Activated CD4-positive, alpha-beta memory T cell treated with anti-CD3 and anti-CD28 coated beads for 36 hours (primary cell): ENCODE measurements at regions of chr2 and their contacts with region 1.

Region 1: DNA sequence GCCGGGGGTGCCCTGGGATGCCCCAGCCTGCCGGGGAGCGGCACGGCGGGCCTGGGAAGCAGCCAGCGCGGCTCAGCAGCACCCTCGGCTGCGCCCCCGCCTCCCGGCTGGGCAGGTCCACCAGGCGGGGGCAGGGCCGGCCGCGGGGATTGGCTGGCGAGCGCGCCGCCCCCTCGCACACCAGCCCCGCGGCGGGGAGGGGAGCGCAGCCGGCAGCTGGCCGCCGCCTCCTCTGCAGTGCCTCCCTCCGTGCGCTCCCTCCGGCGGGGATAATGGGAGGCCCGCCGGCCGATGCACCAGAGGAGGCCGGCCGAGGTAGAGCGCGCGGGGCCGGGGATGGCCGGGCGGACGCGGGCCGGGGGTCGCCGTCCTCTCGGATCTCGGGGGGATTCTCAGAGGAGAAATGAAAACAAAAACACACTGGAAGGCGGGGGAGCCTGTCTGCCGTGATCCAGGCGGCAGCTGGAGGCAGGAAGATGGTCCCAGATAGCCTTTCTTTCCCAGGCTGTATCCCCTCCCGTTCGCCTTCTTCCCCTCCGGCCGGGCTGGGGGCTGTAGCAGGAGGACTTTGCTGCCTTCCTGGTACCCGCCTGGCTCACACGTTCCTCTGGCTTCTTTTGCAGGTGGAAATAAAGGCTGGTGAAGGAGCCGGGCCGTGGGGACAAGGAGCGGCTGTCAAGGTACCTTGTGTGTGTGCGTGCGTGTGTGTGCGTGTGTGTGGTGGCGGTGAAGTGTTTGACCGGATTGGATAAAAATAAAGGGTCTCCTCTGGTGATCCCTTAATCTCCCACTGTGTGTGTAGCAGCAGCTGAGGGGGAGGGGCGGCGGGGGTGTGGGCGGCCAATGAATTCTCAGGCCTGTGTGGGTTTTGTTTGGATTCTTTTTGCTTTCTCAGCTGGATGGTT is 18.0 kb downstream of the TET3 start:
- DNase-seq: peak; percentile 84
- H3K4me3 Mint-ChIP-seq: peak overlapping the region; percentile 76
- H3K27ac Mint-ChIP-seq: peak overlapping the region; percentile 36
- H3K4me1 Mint-ChIP-seq: peaks cover 83% of the 10 kb centered on the region
- H3K27me3 Mint-ChIP-seq: no peaks in the 10 kb centered on the region

Region 2: DNA sequence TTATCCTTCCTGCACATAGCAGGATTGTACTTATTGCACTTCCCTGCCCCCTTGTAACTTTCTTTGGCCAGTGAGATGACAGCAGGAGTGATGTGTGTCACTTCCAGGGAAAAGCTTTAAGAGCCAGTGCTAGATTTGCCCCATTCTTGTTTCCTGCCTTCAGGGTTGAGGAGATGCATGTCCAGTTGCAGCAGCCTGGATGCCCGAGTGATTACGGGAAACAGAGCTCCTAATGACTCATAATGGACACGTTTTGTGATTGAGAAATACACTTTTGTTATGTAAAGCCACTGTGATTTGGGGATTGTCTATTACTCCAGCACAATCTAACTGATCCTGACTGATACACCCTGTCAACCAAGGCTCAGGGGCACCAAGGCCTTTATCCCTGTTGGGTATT is 23.1 kb before region 1 on chr2:
- CTCF ChIA-PET with region 1: no interaction called
- POLR2A ChIA-PET with region 1: interaction called, 10 read pairs
- intact Hi-C with region 1: loop called (anchors 1 kb)
- DNase-seq: peak; percentile 33
- H3K4me3 Mint-ChIP-seq: peak overlapping the region; percentile 53
- H3K27ac Mint-ChIP-seq: peak overlapping the region; percentile 78
- H3K4me1 Mint-ChIP-seq: peaks cover 62% of the 10 kb centered on the region
- H3K27me3 Mint-ChIP-seq: no peaks in the 10 kb centered on the region

Region 3: GRCh38 chr2:74020702-74021406 is 18.1 kb after region 1 on chr2:
- CTCF ChIA-PET with region 1: no interaction called
- POLR2A ChIA-PET with region 1: no interaction called
- intact Hi-C with region 1: no loop called
- DNase-seq: no peak
- H3K4me3 Mint-ChIP-seq: no peak overlapping the region
- H3K27ac Mint-ChIP-seq: no peak overlapping the region
- H3K4me1 Mint-ChIP-seq: peaks cover 38% of the 10 kb centered on the region
- H3K27me3 Mint-ChIP-seq: no peaks in the 10 kb centered on the region

Region 4: DNA sequence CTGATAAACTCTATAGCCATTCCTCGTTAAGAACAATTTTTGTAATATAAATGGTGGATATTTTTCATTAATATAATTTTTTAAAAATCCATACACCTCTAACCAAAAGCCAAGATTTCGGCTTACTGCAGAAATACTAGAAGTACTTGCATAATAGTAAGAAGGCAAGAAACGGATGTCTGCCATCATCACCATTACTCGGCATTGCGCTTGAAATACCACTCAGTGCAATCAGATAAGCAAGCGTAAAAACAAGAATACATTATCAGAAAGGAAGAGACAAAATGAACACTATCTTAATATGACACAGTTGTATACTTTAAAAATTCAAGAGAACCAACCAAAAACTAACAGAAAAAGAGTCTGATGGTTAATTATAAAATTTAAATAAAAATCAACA is 160.2 kb after region 1 on chr2:
- CTCF ChIA-PET with region 1: no interaction called
- POLR2A ChIA-PET with region 1: no interaction called
- intact Hi-C with region 1: no loop called
- DNase-seq: no peak
- H3K4me3 Mint-ChIP-seq: no peak overlapping the region
- H3K27ac Mint-ChIP-seq: no peak overlapping the region
- H3K4me1 Mint-ChIP-seq: peaks cover 7% of the 10 kb centered on the region
- H3K27me3 Mint-ChIP-seq: no peaks in the 10 kb centered on the region